GM23248 (cell line): ENCODE measurements at regions of chr4 and their contacts with region 1.

Region 1: DNA sequence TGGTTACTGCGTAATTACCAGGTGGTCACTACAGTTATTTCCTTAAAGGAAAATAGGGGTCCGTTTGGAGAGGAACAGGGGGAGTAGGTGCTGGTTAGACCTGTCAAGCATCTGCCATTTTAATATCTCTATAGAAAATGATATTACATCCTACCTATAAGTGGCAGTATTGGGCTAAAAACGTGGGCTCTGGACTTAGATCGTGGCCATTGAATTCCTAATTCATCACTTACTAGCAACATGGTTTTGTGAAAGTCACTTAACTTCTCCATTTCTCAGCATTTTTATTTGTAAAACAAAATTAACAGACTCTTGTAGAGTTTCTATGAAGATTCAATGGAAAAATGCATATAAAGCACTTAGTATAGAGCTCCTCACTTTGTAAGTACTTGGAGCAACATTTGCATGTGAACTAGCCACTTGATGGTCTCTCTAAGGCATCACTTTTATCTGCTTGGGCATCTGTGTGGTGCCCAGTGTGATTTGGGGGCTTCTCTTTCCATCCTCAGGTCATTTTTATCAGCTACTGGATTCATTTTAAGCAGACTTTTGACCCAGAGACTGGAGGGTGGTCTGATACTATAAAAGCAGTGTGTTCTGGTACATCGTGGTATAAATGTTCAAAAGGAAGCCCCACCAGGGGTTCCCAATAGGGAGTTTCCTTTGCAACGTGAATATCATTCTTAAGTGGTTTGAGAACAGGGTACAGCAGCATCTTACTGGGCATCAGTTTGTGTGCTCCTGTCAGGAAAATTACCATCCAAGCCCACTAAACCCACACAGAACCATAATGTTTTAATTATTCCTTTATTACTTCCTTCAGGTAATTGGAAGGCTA is 42.7 kb upstream of the RASSF6 start:
- DNase-seq: peak; percentile 80
- H3K4me3 ChIP-seq: no peak overlapping the region
- H3K27ac ChIP-seq: peak overlapping the region; percentile 59
- H3K4me1 ChIP-seq: peaks cover 45% of the 10 kb centered on the region
- H3K27me3 ChIP-seq: no peaks in the 10 kb centered on the region

Region 2: DNA sequence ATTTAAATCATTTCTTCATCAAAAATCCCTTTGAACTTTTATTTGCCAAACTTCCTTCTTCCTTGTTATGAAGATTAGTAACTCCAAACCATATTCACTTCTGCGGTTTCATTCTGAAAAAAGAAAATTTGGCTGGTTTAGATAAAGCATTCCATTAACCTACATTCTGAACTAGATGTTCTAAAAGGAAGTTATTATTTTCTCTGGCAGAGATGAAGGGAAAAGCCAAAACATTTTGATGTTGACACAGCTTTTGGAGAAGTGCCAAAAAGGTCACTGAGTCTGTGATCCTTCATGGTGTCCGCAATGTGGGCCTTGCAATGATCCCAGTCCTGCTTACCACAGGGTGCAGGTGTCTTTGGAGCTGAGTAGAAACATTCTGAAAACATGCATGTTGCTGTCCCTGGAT is 113.4 kb after region 1 on chr4:
- in situ Hi-C with region 1: no loop called
- DNase-seq: peak; percentile 47
- H3K4me3 ChIP-seq: no peak overlapping the region
- H3K27ac ChIP-seq: no peak overlapping the region
- H3K4me1 ChIP-seq: peaks cover 16% of the 10 kb centered on the region; the same call in 1 of the 2 replicates
- H3K27me3 ChIP-seq: no peaks in the 10 kb centered on the region

Region 3: GRCh38 chr4:74133786-74134499 is 471.0 kb after region 1 on chr4:
- in situ Hi-C with region 1: loop called (anchors 10 kb)
- DNase-seq: peak; percentile 95
- H3K4me3 ChIP-seq: no peak overlapping the region
- H3K27ac ChIP-seq: peak overlapping the region; percentile 20; the same call in 1 of the 2 replicates
- H3K4me1 ChIP-seq: 0 out of 2 replicates have a peak, but pooled peaks cover 8% of the 10 kb centered on the region
- H3K27me3 ChIP-seq: no peaks in the 10 kb centered on the region